Left colon (tissue), 2 donors: ENCODE measurements at regions of chr11 and their contacts with region 1.

Region 1: GRCh38 chr11:7559398-7560283 is 45.8 kb downstream of the PPFIBP2 start:
- DNase-seq: no peak
- ATAC-seq: no peak

Region 2: GRCh38 chr11:7657306-7658025 is 97.8 kb after region 1 on chr11:
- intact Hi-C with region 1: loop called (anchors 10 kb)
- DNase-seq: peak; percentile 61 to 62
- ATAC-seq: peak; percentile 97

Region 3: GRCh38 chr11:7665473-7666291 is 106.0 kb after region 1 on chr11:
- intact Hi-C with region 1: loop called in 1 of 2 experiments (anchors 10 kb)
- DNase-seq: peak; percentile 85 to 89
- ATAC-seq: peak; percentile 97